Activated T-helper 2 cell treated with anti-CD3 and anti-CD28 coated beads, Interferon-gamma antibody, Interleukin-2, Interleukin-4, amounts not matched to agents 10 μg/mL and 5 μg/mL and 100 μg/mL, durations not matched to agents 14 hours and 24 hours and 36 hours (primary cell): ENCODE measurements at regions of chr6 and their contacts with region 1.

Region 1: GRCh38 chr6:159862103-159862502 is 28.7 kb upstream of the MAS1 start:
- DNase-seq: no peak
- H3K4me3 Mint-ChIP-seq: no peak overlapping the region
- H3K27ac Mint-ChIP-seq: no peak overlapping the region
- H3K4me1 Mint-ChIP-seq: peaks cover 8% of the 10 kb centered on the region
- H3K27me3 Mint-ChIP-seq: peaks cover 21% of the 10 kb centered on the region

Region 2: DNA sequence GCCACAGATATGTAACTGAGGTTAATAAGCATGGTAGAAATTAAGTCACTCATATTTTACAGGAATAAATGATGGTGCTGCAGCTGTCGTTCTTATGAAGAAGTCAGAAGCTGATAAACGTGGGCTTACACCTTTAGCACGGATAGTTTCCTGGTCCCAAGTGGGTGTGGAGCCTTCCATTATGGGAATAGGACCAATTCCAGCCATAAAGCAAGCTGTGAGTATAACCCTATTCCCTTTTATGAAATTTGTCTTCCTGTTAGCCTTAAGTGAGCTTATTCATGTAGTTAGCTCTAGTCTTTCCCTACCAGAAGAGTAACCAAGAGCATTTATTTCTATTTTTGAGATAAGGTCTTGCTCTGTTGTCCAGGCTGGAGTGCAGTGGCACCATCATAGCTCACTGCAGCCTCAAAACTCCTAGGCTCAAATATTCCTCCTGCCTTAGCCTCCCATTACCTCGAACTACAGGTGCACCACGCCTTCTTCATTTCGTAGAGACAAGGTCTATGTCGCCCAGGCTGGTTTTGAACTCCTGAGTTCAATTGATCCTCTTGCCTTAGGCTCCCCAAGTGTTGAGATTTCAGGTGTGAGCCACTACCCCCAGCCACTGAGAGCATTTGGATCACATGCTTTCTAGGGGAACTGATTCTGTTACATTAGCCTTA is 84.7 kb before region 1 on chr6:
- intact Hi-C with region 1: no loop called
- DNase-seq: no peak
- H3K4me3 Mint-ChIP-seq: no peak overlapping the region
- H3K27ac Mint-ChIP-seq: no peak overlapping the region
- H3K4me1 Mint-ChIP-seq: peaks cover 12% of the 10 kb centered on the region
- H3K27me3 Mint-ChIP-seq: no peaks in the 10 kb centered on the region

Region 3: GRCh38 chr6:159941286-159942113 is 79.4 kb after region 1 on chr6:
- intact Hi-C with region 1: loop called (anchors 1 kb)
- DNase-seq: no peak
- H3K4me3 Mint-ChIP-seq: no peak overlapping the region
- H3K27ac Mint-ChIP-seq: no peak overlapping the region
- H3K4me1 Mint-ChIP-seq: peaks cover 8% of the 10 kb centered on the region
- H3K27me3 Mint-ChIP-seq: peaks cover 12% of the 10 kb centered on the region

Region 4: DNA sequence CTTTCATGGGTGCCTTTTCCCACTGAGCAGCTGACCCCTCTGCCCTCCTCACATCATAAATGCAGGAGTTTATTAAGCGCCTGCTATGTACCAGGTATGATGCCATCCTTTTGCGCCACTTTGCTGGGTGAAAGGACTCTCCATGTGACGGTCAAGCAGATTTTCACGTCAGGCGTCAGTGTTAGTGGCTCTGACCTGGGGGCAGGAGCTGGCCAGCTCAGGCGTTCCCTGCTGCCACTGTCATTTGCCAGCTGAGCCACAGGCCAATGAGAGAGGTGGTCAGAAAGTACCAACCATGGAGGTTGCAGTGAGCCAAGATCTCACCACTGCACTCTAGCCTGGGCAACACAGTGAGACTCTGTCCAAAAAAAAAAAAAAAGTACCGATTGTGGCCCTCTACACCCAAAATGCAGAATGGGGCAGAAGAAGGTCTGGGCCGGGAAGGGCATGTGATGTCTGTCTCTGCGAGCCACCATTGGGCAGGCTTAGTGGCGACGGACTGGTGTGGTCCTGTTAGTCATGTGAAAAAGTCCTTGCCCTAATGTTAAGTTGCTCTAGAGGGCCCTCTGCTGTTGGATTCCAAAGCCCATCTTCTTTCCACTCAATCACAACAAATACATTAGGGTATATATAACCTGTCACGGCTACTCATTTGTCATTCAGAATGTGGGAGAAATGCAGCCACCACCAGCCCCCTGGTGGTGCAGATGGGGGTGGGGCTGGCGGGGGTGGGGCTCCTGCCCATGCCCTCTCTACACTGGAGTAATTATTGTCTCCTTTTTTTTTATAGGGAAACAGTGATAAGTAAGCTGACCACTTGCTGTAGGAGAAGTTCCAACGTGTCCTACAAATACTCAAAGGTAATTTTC is 241.1 kb after region 1 on chr6:
- intact Hi-C with region 1: loop called (anchors 5 kb)
- DNase-seq: no peak
- H3K4me3 Mint-ChIP-seq: no peak overlapping the region
- H3K27ac Mint-ChIP-seq: no peak overlapping the region
- H3K4me1 Mint-ChIP-seq: peaks cover 15% of the 10 kb centered on the region
- H3K27me3 Mint-ChIP-seq: no peaks in the 10 kb centered on the region

Region 5: DNA sequence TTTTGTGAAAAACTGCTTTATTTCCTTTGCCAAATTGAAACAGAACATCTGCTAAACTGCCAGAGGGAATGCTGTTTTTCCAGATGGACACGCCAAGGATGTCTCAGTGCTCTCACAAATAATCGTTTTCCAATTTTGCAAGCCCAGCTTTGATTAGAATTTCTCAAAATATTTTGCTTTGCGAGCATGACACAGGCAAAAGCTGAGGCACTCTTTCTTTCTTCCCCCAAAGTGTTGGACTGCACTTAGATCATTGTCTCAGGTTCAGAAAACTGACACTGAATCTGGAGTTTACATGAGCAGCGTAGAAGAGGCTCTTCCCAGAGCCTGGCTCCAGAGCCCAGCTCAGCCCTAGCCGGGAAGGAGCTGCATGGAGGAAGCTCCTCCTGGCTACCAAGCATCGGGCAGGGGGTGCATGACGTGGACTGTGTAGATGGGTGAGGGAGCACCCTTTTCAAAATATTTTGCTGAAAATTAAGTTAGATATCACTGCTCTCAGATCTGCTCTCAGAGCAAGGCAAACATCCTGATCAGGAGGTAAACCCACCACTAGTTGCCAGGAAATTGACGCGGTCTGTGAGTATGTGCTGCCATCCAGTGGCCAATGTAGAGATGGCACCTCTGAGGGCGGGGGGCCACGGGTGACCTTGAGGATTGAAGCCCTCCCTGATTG is 593.6 kb after region 1 on chr6:
- intact Hi-C with region 1: loop called (anchors 10 kb)
- DNase-seq: peak; percentile 56
- H3K4me3 Mint-ChIP-seq: no peak overlapping the region
- H3K27ac Mint-ChIP-seq: no peak overlapping the region
- H3K4me1 Mint-ChIP-seq: peaks cover 25% of the 10 kb centered on the region
- H3K27me3 Mint-ChIP-seq: peaks cover 19% of the 10 kb centered on the region